ENCODE measurements at regions of chr1 and their contacts with region 1.

Region 1: DNA sequence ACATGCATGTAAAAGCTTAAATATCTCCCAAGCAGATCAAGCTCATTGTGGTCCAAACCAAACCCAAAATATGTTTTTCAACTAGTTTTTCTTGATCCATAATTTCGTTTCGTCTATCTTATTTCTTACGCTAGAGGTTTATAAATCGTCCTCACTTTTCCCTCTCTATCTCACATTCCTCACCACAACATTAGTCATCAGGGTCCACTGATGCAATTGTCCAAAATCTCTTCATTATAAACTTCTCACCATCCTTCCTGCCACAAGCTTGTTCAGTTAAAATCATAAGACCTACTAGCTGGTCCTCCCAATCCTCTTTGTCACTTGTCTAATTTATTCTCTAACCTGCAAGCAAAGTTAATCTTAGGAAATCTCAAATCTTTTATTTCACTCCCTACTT is 173.0 kb upstream of the PALMD start:
- DNase-seq: no peak

Region 2: DNA sequence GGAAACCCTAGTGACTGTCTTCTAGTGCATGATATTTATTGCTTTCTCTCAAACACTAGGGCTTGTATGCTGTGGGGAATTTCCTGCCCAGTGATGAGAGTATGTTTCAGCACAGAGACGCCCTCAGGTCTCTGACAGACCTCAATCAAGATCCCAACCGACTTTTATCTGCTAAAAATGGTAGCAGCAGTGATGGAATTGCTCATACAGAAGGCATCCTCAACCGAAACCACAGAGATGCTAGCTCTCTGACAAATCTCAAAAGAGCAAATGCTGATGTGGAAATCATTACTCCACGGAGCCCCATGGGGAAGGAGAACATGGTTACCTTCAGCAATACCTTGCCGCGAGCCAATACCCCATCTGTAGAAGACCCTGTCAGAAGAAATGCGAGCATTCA is 167.3 kb before region 1 on chr1:
- intact Hi-C with region 1: no loop called
- DNase-seq: no peak

Region 3: GRCh38 chr1:101002551-101002950 is 1529.7 kb after region 1 on chr1:
- intact Hi-C with region 1: loop called in 1 of 2 experiments (anchors 5 kb)
- DNase-seq: no peak

Measured in posterior vena cava (tissue), 2 donors.